ENCODE measurements at regions of chr20 and their contacts with region 1.

Region 1: GRCh38 chr20:40689943-40690835 is 1.2 kb upstream of the MAFB start:
- DNase-seq: peak; percentile 92
- H3K4me3 Mint-ChIP-seq: peak overlapping the region; percentile 81
- H3K27ac Mint-ChIP-seq: no peak overlapping the region
- H3K4me1 Mint-ChIP-seq: no peaks in the 10 kb centered on the region
- H3K27me3 Mint-ChIP-seq: no peaks in the 10 kb centered on the region
- CTCF ChIP-seq: peak; percentile 95

Region 2: GRCh38 chr20:39885975-39886649 is 804.1 kb before region 1 on chr20:
- CTCF ChIA-PET with region 1: interaction called, 4 read pairs
- POLR2A ChIA-PET with region 1: interaction called, 7 read pairs
- intact Hi-C with region 1: loop called (anchors 1 kb)
- DNase-seq: peak; percentile 80
- H3K4me3 Mint-ChIP-seq: no peak overlapping the region
- H3K27ac Mint-ChIP-seq: no peak overlapping the region
- H3K4me1 Mint-ChIP-seq: peaks cover 9% of the 10 kb centered on the region
- H3K27me3 Mint-ChIP-seq: no peaks in the 10 kb centered on the region
- CTCF ChIP-seq: peak; percentile 58

Region 3: GRCh38 chr20:40279390-40279789 is 410.8 kb before region 1 on chr20:
- CTCF ChIA-PET with region 1: interaction called, 71 read pairs
- POLR2A ChIA-PET with region 1: interaction called, 105 read pairs
- intact Hi-C with region 1: no loop called
- DNase-seq: peak; percentile 84
- H3K4me3 Mint-ChIP-seq: no peak overlapping the region
- H3K27ac Mint-ChIP-seq: peak overlapping the region; percentile 84
- H3K4me1 Mint-ChIP-seq: peaks cover 28% of the 10 kb centered on the region
- H3K27me3 Mint-ChIP-seq: no peaks in the 10 kb centered on the region
- CTCF ChIP-seq: no peak

Region 4: GRCh38 chr20:40532103-40532502 is 158.1 kb before region 1 on chr20:
- CTCF ChIA-PET with region 1: interaction called, 3 read pairs
- POLR2A ChIA-PET with region 1: interaction called, 5 read pairs
- intact Hi-C with region 1: loop called (anchors 10 kb)
- DNase-seq: peak; percentile 66
- H3K4me3 Mint-ChIP-seq: no peak overlapping the region
- H3K27ac Mint-ChIP-seq: no peak overlapping the region
- H3K4me1 Mint-ChIP-seq: peaks cover 9% of the 10 kb centered on the region
- H3K27me3 Mint-ChIP-seq: no peaks in the 10 kb centered on the region
- CTCF ChIP-seq: peak; percentile 39

Region 5: GRCh38 chr20:40628877-40629276 is 61.3 kb before region 1 on chr20:
- CTCF ChIA-PET with region 1: interaction called, 22 read pairs
- POLR2A ChIA-PET with region 1: interaction called, 62 read pairs
- intact Hi-C with region 1: no loop called
- DNase-seq: peak; percentile 84
- H3K4me3 Mint-ChIP-seq: no peak overlapping the region
- H3K27ac Mint-ChIP-seq: peak overlapping the region; percentile 80
- H3K4me1 Mint-ChIP-seq: peaks cover 54% of the 10 kb centered on the region
- H3K27me3 Mint-ChIP-seq: no peaks in the 10 kb centered on the region
- CTCF ChIP-seq: no peak

Region 6: GRCh38 chr20:40706977-40707582 is 16.9 kb after region 1 on chr20:
- CTCF ChIA-PET with region 1: interaction called, 20 read pairs
- POLR2A ChIA-PET with region 1: interaction called, 9 read pairs
- intact Hi-C with region 1: no loop called
- DNase-seq: no peak
- H3K4me3 Mint-ChIP-seq: no peak overlapping the region
- H3K27ac Mint-ChIP-seq: no peak overlapping the region
- H3K4me1 Mint-ChIP-seq: no peaks in the 10 kb centered on the region
- H3K27me3 Mint-ChIP-seq: no peaks in the 10 kb centered on the region
- CTCF ChIP-seq: no peak

Region 7: DNA sequence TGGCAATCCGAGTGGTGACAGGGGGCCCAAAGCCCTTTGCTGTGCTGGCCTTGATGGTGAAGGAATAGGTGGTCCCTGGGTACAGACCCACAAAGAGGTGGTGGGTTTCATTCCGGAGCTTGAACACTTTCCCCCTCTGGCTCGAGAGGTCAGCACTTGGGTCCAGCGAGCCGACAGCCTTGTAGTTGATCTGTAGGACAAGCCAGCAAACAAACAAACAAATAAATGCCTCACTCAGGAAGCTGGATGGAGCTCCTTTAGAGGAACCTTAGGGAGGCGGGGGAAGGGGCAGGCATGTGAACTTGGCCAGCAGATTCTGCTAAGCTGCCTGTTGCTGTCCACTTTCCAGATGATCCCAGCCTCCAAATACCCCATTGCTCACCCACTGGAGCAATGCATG is 1661.9 kb after region 1 on chr20:
- CTCF ChIA-PET with region 1: no interaction called
- POLR2A ChIA-PET with region 1: no interaction called
- intact Hi-C with region 1: no loop called
- DNase-seq: no peak
- H3K4me3 Mint-ChIP-seq: no peak overlapping the region
- H3K27ac Mint-ChIP-seq: no peak overlapping the region
- H3K4me1 Mint-ChIP-seq: no peaks in the 10 kb centered on the region
- H3K27me3 Mint-ChIP-seq: no peaks in the 10 kb centered on the region
- CTCF ChIP-seq: no peak

Measured in MCF 10A (cell line).